Heart right ventricle (tissue), 16 donors: ENCODE measurements at regions of chr20 and their contacts with region 1.

Region 1: GRCh38 chr20:35994994-35995453 is 26.6 kb downstream of the CNBD2 start:
- DNase-seq: peak; percentile 85 to 86
- ATAC-seq: peak; percentile 91 to 96 (median 96)
- H3K4me3 ChIP-seq: no peak overlapping the region
- H3K27ac ChIP-seq: peak overlapping the region in 1 of 10 donors; percentile 12
- H3K4me1 ChIP-seq: peaks cover 0 to 8% (median 0%) of the 10 kb centered on the region in 9 donors
- H3K27me3 ChIP-seq: no peaks in the 10 kb centered on the region
- CTCF ChIP-seq: peak; percentile 67 to 95 (median 93)

Region 2: DNA sequence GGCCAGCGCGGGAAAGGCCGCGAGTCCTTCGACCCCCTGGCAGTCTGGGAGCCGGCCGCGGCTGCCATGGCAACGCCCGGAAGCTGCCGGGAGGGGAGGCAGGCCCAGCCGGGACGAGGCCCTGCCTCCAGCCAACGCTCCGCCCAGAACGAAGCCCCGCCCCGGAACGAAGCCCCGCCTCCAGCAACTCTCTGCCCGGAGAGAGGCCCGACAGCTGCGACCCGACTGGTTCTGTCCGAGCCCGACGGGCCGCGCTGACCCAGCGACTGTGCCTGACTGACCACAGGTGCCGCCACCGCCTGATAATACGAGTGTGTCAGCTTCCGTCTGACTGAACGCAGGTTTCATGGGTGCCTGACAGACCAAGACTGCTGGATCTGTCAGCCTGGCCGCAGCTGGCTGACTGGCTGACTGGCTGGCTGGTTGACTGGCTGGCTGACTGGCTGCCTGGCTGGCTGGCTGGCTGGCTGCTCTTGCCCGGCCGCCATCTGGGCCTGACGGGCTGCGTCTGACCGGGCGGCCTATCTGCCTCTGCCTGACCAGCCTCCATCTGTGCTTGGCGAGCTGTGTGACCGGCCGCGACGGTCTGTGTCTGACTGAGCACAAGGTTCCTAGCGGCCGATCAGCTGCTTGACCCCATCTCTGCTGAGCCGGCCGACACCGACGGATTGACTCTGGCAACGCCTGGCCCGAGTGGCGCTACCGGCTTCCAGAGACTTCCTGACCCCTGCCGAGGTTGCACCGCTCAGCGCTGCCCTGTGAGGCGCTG is 69.8 kb after region 1 on chr20:
- intact Hi-C with region 1: loop called in 1 of 10 experiments (anchors 10 kb)
- DNase-seq: peak; percentile 94 to 98
- ATAC-seq: peak; percentile 98 to 99 (median 98)
- H3K4me3 ChIP-seq: peak overlapping the region; percentile 42 to 72 (median 62)
- H3K27ac ChIP-seq: peak overlapping the region; percentile 47 to 86 (median 80)
- H3K4me1 ChIP-seq: peaks cover 4 to 24% (median 13%) of the 10 kb centered on the region in 9 donors
- H3K27me3 ChIP-seq: no peaks in the 10 kb centered on the region
- CTCF ChIP-seq: peak in 2 of 9 donors; percentile 5 to 21

Region 3: DNA sequence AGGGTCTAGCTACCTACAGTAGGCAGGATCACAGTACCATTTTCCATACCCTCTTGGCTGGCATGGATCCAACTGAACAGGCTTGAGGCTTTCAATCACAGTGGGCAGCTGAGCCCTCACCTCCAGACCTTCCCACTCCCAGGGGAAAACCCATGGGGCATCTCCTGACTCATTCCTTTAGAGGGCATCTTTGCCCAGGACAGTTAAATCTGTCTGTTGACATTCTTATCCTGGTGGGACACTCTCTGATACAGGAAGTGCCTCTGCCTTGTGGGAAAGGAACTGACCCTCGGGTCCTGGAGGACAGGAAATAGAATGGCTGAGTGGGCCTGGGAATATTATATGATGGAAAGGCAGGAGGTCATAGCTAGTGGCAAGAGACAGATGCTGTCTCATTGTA is 149.3 kb after region 1 on chr20:
- intact Hi-C with region 1: loop called in 3 of 10 experiments (anchors 2 to 5 kb)
- DNase-seq: no peak
- ATAC-seq: no peak
- H3K4me3 ChIP-seq: no peak overlapping the region
- H3K27ac ChIP-seq: no peak overlapping the region
- H3K4me1 ChIP-seq: peaks cover 8 to 50% (median 26%) of the 10 kb centered on the region in 9 donors
- H3K27me3 ChIP-seq: no peaks in the 10 kb centered on the region
- CTCF ChIP-seq: no peak

Region 4: DNA sequence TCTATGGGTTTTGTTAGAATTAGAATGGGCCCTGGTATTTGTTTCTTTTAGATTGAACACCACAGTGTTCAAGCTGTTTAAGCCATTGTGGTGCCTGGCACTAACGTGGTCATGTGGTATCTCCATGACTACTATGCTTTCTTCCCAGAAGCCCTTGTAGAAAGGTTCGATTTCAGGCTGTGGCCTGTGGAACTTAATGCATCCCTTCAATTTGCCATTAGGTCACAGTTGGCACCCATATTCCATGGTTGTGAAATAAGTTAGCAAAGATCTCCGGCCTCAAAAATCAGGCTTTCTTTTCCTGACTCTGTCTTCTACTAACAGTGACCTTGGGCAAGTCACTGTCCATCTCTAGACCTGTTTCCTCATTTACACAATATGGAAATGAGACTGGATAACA is 210.0 kb after region 1 on chr20:
- intact Hi-C with region 1: loop called in 1 of 10 experiments (anchors 5 kb)
- DNase-seq: no peak
- ATAC-seq: no peak
- H3K4me3 ChIP-seq: no peak overlapping the region
- H3K27ac ChIP-seq: no peak overlapping the region
- H3K4me1 ChIP-seq: peaks cover 0 to 6% (median 0%) of the 10 kb centered on the region in 9 donors
- H3K27me3 ChIP-seq: no peaks in the 10 kb centered on the region
- CTCF ChIP-seq: no peak

Region 5: GRCh38 chr20:36447101-36447500 is 452.1 kb after region 1 on chr20:
- intact Hi-C with region 1: loop called in 1 of 10 experiments (anchors 10 kb)
- DNase-seq: no peak
- ATAC-seq: no peak
- H3K4me3 ChIP-seq: no peak overlapping the region
- H3K27ac ChIP-seq: no peak overlapping the region
- H3K4me1 ChIP-seq: no peaks in the 10 kb centered on the region
- H3K27me3 ChIP-seq: no peaks in the 10 kb centered on the region
- CTCF ChIP-seq: no peak